CD8-positive, alpha-beta memory T cell (primary cell): ENCODE measurements at regions of chr22 and their contacts with region 1.

Region 1: DNA sequence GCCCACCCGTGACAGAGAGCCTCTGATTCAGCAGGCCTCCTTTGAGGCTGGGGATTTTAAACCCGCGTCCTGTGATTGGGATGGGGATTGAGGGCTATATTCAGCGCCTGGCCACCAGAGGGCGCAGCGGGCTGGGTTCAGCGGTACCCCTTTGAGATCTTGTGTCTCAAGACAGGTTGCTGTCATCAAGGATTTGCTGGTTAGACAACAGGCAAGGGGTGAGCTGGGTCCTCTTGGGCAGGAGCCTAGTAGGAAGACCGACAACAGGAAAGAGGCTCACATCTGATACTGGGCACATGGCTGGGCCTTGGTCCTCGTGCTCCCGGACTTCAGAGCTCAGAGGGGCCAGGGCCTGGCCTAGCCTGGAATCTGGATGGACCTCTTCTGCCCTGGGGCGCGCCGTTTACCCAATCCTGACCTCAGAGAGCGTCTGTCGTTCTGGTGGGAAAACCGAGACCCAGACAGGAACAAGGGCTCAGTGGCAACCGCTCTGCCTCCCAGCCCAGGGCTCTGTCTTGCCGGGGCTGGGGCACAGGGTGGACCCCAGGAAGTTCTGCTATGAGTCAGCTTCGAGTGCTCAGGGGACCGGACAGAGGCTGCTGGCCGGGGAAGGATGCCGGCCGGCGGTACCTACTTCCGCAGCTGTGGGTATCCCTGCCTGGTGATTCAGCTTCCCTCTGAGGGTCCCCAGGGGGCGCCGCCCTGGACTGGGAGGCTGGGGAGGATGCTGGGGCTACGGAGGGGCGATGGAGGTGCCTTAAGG is 929 bp upstream of the SLC35E4 start:
- DNase-seq: peak; percentile 81 to 90 (median 85)
- H3K4me3 ChIP-seq: peak overlapping the region; percentile 72
- H3K4me3 Mint-ChIP-seq: peak overlapping the region; percentile 79 to 96 (median 84)
- H3K27ac ChIP-seq: peak overlapping the region; percentile 69
- H3K27ac Mint-ChIP-seq: peak overlapping the region; percentile 90 to 98 (median 94)
- H3K4me1 ChIP-seq: peaks cover 35% of the 10 kb centered on the region
- H3K4me1 Mint-ChIP-seq: peaks cover 18 to 30% (median 21%) of the 10 kb centered on the region in 3 donors
- H3K27me3 ChIP-seq: no peaks in the 10 kb centered on the region
- H3K27me3 Mint-ChIP-seq: no peaks in the 10 kb centered on the region

Region 2: DNA sequence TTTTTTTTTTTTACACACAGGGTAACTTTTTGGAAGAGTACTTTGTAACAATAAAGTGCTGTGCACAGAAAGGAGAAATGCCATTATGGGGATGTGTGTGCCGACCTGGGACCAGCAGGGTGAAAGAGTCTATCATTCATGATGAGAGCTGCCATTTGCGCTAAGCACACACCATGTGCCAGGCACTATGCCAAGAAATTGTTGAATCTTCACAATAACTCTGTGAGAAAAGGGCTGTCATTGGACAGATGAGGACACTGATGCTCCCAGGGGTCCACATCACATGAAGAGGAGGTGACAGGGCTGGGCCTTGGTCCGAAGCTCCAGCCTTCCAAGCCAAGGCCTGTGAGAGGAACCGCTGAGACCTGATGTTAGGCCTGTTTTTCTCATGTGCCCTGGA is 27.4 kb after region 1 on chr22:
- CTCF ChIA-PET with region 1: interaction called, 14 read pairs
- POLR2A ChIA-PET with region 1: interaction called, 4 read pairs
- DNase-seq: no peak
- H3K4me3 ChIP-seq: no peak overlapping the region
- H3K4me3 Mint-ChIP-seq: no peak overlapping the region
- H3K27ac ChIP-seq: no peak overlapping the region
- H3K27ac Mint-ChIP-seq: peak overlapping the region in 1 of 8 donors; percentile 65
- H3K4me1 ChIP-seq: peaks cover 12% of the 10 kb centered on the region
- H3K4me1 Mint-ChIP-seq: peaks cover 20 to 48% (median 30%) of the 10 kb centered on the region in 3 donors
- H3K27me3 ChIP-seq: no peaks in the 10 kb centered on the region
- H3K27me3 Mint-ChIP-seq: no peaks in the 10 kb centered on the region

Region 3: GRCh38 chr22:30754971-30755756 is 120.5 kb after region 1 on chr22:
- CTCF ChIA-PET with region 1: interaction called, 48 read pairs
- POLR2A ChIA-PET with region 1: no interaction called
- DNase-seq: peak; percentile 3 to 60 (median 26)
- H3K4me3 ChIP-seq: no peak overlapping the region
- H3K4me3 Mint-ChIP-seq: no peak overlapping the region
- H3K27ac ChIP-seq: no peak overlapping the region
- H3K27ac Mint-ChIP-seq: no peak overlapping the region
- H3K4me1 ChIP-seq: no peaks in the 10 kb centered on the region
- H3K4me1 Mint-ChIP-seq: no peaks in the 10 kb centered on the region
- H3K27me3 ChIP-seq: no peaks in the 10 kb centered on the region
- H3K27me3 Mint-ChIP-seq: peaks cover 4% of the 10 kb centered on the region in 2 donors

Region 4: DNA sequence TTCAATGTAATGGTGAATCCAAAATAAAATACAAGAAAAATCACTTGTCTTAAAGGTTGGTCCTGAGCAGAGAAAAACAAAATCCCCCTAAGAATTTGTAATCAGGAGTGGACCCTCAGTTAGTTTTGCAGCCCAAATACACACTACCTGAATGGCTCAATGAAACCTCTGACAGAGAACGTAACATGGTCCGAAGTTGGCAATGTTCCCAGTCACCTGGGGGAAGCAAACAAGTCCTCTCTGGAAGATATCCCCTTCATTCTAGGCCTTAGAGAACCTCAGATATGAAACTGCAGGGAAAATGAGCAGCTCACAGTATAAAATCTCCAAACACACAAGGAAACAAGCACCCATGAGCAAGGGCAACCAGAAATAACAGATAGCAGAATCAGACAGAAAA is 275.7 kb after region 1 on chr22:
- CTCF ChIA-PET with region 1: no interaction called
- POLR2A ChIA-PET with region 1: interaction called, 11 read pairs
- DNase-seq: no peak
- H3K4me3 ChIP-seq: no peak overlapping the region
- H3K4me3 Mint-ChIP-seq: no peak overlapping the region
- H3K27ac ChIP-seq: no peak overlapping the region
- H3K27ac Mint-ChIP-seq: peak overlapping the region in 1 of 8 donors; percentile 32
- H3K4me1 ChIP-seq: no peaks in the 10 kb centered on the region
- H3K4me1 Mint-ChIP-seq: peaks cover 0 to 2% (median 0%) of the 10 kb centered on the region in 3 donors
- H3K27me3 ChIP-seq: no peaks in the 10 kb centered on the region
- H3K27me3 Mint-ChIP-seq: no peaks in the 10 kb centered on the region

Region 5: GRCh38 chr22:31084811-31085497 is 450.3 kb after region 1 on chr22:
- CTCF ChIA-PET with region 1: interaction called, 14 read pairs
- POLR2A ChIA-PET with region 1: interaction called, 4 read pairs
- DNase-seq: peak; percentile 81 to 89 (median 84)
- H3K4me3 ChIP-seq: peak overlapping the region; percentile 69
- H3K4me3 Mint-ChIP-seq: peak overlapping the region; percentile 83 to 92 (median 86)
- H3K27ac ChIP-seq: peak overlapping the region; percentile 68
- H3K27ac Mint-ChIP-seq: peak overlapping the region; percentile 45 to 90 (median 78)
- H3K4me1 ChIP-seq: peaks cover 38% of the 10 kb centered on the region
- H3K4me1 Mint-ChIP-seq: peaks cover 29 to 42% (median 31%) of the 10 kb centered on the region in 3 donors
- H3K27me3 ChIP-seq: no peaks in the 10 kb centered on the region
- H3K27me3 Mint-ChIP-seq: no peaks in the 10 kb centered on the region